ENCODE measurements at regions of chr14 and their contacts with region 1.

Region 1: DNA sequence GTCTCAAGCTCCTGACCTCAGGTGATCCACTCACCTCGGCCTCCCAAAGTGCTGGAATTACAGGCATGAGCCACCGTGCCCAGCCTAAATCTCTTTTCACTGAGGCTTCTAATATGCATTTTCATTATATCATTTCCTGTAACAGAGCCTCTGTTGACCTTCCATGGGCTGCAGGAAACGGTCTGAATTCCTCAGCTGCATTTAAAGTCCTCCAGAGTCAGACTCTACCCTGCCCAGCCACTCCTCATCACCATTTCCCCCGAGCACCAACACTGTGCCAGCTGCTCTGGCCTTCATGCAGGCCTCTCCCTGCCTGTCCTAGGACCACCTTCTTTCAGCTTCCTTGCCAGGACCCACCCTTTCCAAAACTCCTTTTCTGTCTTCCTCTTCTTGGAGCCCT is 9.8 kb upstream of the NFKBIA start:
- DNase-seq: no peak
- ATAC-seq: peak; percentile 43
- H3K4me3 ChIP-seq: no peak overlapping the region
- H3K27ac ChIP-seq: peak overlapping the region; percentile 29 to 37
- H3K4me1 ChIP-seq: peaks cover 3 to 28% of the 10 kb centered on the region in 2 donors
- H3K27me3 ChIP-seq: no peaks in the 10 kb centered on the region
- CTCF ChIP-seq: no peak

Region 2: DNA sequence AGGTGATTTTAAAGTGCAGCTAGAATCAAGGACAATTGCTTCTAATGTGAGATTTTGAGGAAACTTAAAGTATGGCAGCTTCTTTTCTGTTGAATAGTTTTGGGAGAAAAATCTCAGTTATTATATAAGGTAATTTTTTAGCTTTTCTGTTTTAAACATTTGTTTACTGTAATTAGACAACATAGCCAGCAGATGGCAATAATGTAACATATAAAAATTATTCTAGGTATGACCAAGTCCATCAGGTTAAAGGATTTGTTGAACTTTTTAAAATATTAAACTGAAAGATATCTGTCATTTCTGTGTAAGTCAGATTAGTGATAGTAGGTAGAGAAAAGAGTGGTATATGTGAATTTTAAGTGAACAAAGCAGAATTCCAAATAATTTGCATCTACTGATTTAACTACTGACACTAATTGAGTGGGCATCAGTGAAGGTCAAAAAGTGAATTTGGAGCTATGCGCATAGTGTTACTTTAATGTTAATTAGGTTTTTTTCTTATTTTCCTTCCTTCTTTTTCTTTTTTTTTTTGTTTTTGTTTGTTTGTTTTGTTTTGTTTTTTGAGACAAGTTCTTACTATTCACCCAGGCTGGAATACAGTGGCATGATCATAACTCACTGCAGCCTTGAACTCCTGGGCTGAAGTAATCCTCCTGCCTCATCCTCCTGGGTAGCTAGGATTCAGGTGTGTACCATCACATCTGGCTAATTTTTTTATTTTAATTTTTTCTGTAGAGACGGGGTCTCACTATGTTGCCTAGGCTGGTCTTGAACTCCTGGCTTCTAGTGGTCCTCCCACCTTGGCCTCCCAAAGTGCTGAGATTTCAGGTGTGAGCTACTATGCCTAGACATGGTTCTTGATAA is 273.4 kb before region 1 on chr14:
- intact Hi-C with region 1: loop called in 1 of 2 experiments (anchors 5 kb)
- DNase-seq: peak in 1 of 4 donors; percentile 17
- ATAC-seq: peak; percentile 70
- H3K4me3 ChIP-seq: no peak overlapping the region
- H3K27ac ChIP-seq: no peak overlapping the region
- H3K4me1 ChIP-seq: no peaks in the 10 kb centered on the region
- H3K27me3 ChIP-seq: no peaks in the 10 kb centered on the region
- CTCF ChIP-seq: peak; percentile 28 to 38

Region 3: DNA sequence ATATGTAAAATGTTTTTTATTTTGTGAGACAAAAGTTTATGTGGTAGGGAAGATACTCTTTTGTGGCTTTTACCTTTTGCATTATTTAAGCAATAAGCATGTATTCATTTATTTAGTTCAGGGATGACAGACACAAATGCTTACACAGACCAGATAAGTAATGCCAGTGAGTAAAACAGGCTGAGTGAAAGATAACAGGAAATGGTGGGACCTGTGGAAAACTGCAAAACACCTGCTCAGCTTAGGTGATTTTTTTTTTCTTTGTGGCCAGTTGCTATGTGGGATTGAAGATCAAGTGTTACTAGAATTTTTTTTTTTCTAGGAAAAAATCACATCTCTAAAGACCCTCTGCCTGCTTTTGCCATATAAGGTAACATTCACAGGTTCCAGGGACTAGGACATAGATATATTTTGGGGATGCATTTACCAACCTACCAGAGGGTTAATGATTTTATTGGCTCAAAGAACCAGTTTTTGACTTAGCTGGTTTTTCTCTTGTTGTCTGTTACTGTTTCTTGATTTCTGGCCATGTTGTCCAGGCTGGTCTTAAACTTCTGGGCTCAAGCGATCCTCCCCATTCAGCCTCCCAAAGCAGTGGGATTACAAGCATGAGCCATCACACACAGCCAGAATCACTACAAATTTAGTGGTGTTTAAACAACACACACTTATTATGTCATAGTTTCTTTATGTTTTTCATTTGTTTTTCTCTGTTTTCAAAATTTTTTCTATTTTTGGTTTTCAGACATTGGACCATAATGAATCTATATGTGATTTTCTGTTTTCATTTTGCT is 112.4 kb before region 1 on chr14:
- intact Hi-C with region 1: no loop called
- DNase-seq: no peak
- ATAC-seq: no peak
- H3K4me3 ChIP-seq: no peak overlapping the region
- H3K27ac ChIP-seq: peak overlapping the region in 1 of 2 donors; percentile 70
- H3K4me1 ChIP-seq: peaks cover 5 to 97% of the 10 kb centered on the region in 2 donors
- H3K27me3 ChIP-seq: no peaks in the 10 kb centered on the region
- CTCF ChIP-seq: no peak

Region 4: GRCh38 chr14:35390577-35391387 is 23.6 kb before region 1 on chr14:
- intact Hi-C with region 1: no loop called
- DNase-seq: no peak
- ATAC-seq: peak; percentile 57
- H3K4me3 ChIP-seq: no peak overlapping the region
- H3K27ac ChIP-seq: no peak overlapping the region
- H3K4me1 ChIP-seq: peaks cover 3 to 12% of the 10 kb centered on the region in 2 donors
- H3K27me3 ChIP-seq: no peaks in the 10 kb centered on the region
- CTCF ChIP-seq: no peak

Measured in left lung (tissue), 14 donors.